Heart right ventricle (tissue), 16 donors: ENCODE measurements at regions of chr9 and their contacts with region 1.

Region 1: DNA sequence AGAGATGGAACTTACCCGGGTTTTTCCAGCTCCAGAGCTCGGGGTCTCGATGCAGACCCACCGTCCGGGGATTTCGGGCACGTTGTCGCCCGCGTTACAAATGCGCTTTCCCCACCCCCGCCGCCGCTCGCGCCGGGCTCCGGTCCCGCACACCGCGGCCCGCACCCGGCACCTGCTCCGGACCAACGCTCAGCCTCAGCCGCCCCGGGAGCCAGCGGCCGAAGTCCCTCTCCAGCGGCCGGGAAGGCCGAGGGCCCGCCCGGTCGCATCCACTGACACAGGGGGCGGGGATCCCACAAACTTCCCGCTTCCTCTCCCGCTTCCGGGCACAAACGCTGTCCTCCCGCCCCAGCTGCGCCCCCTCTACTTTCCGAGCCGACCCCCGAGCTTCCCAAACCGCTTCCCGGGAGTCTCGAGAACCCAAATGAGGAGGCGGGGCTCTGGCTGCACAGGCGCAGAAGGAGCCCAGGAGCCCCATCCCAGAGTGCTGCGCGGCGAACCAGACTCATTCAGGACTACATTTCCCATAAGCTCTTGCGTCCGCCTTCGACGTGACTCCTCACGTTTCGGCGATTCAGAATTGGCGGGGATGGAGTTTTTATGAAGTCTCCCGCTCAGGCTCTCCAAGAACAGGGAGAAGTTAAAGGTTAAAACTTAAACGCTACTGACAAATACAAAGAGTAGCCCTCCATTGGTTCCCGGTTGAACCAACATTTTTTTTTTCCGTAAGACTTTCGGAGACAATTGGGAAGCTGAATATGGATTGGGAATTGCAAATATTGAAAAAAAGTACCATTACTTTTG is at the start of gene ZNF782:
- DNase-seq: peak; percentile 91 to 95
- ATAC-seq: peak; percentile 99 to 100 (median 99)
- H3K4me3 ChIP-seq: peak within 1 kb of the TSS; percentile 66 to 90 (median 82)
- H3K27ac ChIP-seq: peak within 1 kb of the TSS in 9 of 10 donors; percentile 61 to 88 (median 84)
- H3K4me1 ChIP-seq: peaks cover 4 to 33% (median 21%) of the 10 kb centered on the region in 9 donors
- H3K27me3 ChIP-seq: no peaks in the 10 kb centered on the region
- CTCF ChIP-seq: no peak
- total RNA-seq, gene ZNF782: 1.9 to 4.8 (median 3.1) TPM

Region 2: DNA sequence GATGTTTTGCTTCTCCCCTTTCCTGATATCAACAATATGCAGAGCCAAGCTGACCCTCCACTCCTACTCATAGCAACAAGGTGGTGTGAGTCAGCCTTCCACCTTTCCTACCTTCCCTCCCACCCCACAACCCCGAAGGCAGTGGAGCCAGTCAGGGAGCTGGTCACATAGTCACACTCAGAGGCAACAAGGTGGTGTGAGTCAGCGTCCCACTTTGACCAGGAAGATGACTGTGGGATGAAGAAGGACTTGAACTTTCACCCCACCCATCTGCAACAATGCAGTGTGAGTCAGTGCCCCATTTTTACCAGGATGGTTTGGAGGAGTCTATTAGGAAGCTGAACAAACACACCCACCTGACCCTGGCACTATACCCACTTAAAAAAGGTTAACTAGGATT is 30.2 kb after region 1 on chr9:
- intact Hi-C with region 1: no loop called
- DNase-seq: no peak
- ATAC-seq: peak in 1 of 8 donors; percentile 25
- H3K4me3 ChIP-seq: no peak overlapping the region
- H3K27ac ChIP-seq: no peak overlapping the region
- H3K4me1 ChIP-seq: peaks cover 0 to 5% (median 0%) of the 10 kb centered on the region in 9 donors
- H3K27me3 ChIP-seq: peaks cover 0 to 3% (median 0%) of the 10 kb centered on the region in 7 donors
- CTCF ChIP-seq: no peak

Region 3: DNA sequence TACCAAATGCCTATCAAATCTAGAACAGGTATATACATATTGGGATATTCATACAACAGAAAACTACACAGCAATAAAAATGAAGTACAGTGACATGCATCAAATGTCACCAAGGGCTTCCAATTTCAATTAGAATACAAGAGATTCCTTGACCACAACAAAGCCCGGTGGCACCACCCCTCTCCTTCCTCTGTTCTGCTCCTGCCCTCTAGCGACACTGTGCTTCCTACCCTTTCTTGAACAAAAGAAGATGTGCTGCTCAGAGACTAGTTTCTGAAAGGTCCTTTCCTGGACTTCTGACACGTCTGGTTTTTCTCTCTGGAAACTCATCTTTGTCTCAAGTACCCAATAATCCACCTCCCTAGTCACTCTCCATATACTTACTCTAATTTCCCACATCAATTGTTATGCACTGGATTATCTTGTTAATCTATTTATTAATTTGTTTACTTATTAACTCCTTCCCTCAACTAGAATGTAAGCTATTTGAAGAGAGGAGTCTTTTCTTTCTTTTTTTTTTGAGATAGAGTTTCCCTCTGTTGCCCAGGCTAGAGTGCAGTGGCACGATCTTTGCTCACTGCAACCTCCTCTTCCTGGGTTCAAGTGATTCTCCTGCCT is 255.0 kb after region 1 on chr9:
- intact Hi-C with region 1: loop called in 8 of 10 experiments (anchors 1 to 10 kb)
- DNase-seq: peak in 1 of 2 donors; percentile 30
- ATAC-seq: peak in 3 of 8 donors; percentile 55 to 67 (median 55)
- H3K4me3 ChIP-seq: no peak overlapping the region
- H3K27ac ChIP-seq: no peak overlapping the region
- H3K4me1 ChIP-seq: no peaks in the 10 kb centered on the region
- H3K27me3 ChIP-seq: peaks cover 0 to 18% (median 0%) of the 10 kb centered on the region in 7 donors
- CTCF ChIP-seq: peak; percentile 12 to 60 (median 49)

Region 4: GRCh38 chr9:97237951-97238851 is 383.9 kb after region 1 on chr9:
- intact Hi-C with region 1: loop called in 3 of 10 experiments (anchors 1 to 10 kb)
- DNase-seq: peak; percentile 82 to 84
- ATAC-seq: peak; percentile 99 to 100 (median 99)
- H3K4me3 ChIP-seq: peak overlapping the region; percentile 41 to 84 (median 66)
- H3K27ac ChIP-seq: peak overlapping the region; percentile 2 to 89 (median 78)
- H3K4me1 ChIP-seq: peaks cover 0 to 17% (median 11%) of the 10 kb centered on the region in 9 donors
- H3K27me3 ChIP-seq: no peaks in the 10 kb centered on the region
- CTCF ChIP-seq: no peak

Region 5: DNA sequence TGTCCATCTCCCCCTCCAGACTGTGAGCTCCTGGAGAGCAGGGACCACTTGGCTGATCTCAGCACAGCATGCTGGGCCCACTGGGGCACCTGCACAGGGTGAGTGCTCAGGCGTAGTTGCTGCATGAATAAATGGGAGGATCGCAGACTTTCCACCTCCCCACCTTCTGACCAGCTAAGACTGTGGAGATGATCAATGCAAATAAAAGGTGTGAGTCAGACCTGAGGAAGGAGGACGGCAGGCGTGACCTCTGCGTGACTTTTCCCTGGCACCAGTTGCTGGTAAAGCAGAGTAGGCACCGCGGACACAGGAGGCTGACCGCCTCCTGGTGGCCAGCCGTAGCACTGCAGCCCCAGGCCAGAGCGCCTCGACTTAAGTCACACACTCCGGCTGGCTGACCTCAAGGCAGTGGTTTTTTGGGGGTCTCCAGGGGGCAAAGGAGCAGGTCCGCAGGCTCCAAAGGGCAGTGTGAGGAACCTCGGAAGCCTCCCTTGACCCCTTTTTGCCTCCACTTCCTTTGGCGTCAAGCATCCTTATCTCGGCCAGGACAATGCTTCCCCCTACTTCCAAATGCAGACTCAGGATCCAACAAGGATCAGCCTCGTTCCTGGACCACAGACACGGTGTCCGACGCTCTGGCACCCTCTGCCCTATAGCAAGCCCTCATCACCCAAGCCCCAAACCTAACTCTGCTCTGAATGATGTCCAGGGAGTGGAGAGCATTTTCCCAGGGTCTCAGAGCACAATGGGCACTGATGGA is 544.9 kb after region 1 on chr9:
- intact Hi-C with region 1: loop called (anchors 1 to 5 kb)
- DNase-seq: peak; percentile 18 to 67
- ATAC-seq: peak; percentile 65 to 90 (median 82)
- H3K4me3 ChIP-seq: no peak overlapping the region
- H3K27ac ChIP-seq: no peak overlapping the region
- H3K4me1 ChIP-seq: peaks cover 0 to 7% (median 0%) of the 10 kb centered on the region in 9 donors
- H3K27me3 ChIP-seq: peaks cover 0 to 6% (median 0%) of the 10 kb centered on the region in 7 donors
- CTCF ChIP-seq: peak; percentile 75 to 97 (median 92)

Region 6: GRCh38 chr9:97615439-97616072 is 761.3 kb after region 1 on chr9:
- intact Hi-C with region 1: loop called in 2 of 10 experiments (anchors 10 kb)
- DNase-seq: peak in 1 of 2 donors; percentile 66
- ATAC-seq: peak; percentile 44 to 76 (median 66)
- H3K4me3 ChIP-seq: no peak overlapping the region
- H3K27ac ChIP-seq: peak overlapping the region in 1 of 10 donors; percentile 15
- H3K4me1 ChIP-seq: peaks cover 0 to 13% (median 7%) of the 10 kb centered on the region in 9 donors
- H3K27me3 ChIP-seq: no peaks in the 10 kb centered on the region
- CTCF ChIP-seq: peak; percentile 64 to 89 (median 85)

Region 7: DNA sequence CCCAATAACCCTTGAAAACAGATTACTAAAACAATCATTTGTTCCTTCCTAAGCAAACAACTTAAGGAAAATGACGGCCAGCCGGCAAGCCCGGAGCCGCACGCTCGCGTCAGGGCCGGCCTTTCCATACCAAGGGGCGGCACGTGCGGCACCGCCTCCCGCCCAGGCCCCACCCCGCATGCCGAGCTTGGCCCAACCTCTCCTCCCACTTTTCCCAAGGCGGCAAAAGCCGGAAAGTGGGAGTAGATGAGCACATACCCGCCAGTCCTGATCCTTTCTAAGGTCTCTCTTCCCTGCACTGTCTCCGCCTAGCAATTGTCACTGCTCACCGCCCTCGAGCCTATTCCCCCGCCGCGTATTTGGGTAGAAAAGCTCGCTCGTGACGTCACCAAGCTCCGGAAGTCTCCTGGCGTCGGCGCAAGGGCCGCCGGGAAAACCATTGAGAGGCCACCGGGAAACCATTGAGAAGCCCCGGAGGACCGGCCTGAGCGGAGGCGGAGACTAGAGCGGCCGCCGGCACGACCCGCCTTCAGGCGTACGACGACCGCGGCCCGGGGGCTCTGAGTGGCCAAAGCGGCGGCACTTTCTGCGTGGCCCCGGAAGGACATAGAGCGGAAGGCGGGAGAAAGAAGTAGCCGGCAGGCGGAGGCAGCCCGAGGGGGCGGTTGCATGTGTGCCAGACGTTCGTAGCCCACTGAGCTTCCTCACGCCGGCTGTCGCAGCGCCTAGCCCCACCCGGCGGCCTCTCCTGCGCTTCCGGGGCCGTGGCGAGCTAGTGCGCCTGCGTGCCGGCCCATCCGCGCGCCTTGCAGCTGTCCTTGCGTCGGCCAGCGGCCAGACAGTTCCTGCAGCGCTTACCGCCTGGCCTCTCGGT is 778.9 kb after region 1 on chr9 and contains the starts of genes NCBP1 and TSTD2:
- intact Hi-C with region 1: loop called in 1 of 10 experiments (anchors 10 kb)
- DNase-seq: peak; percentile 97
- ATAC-seq: peak; percentile 94 to 97 (median 95)
- H3K4me3 ChIP-seq: peak within 1 kb of the TSS; percentile 49 to 98 (median 94)
- H3K27ac ChIP-seq: peak within 1 kb of the TSS; percentile 93 to 99 (median 96)
- H3K4me1 ChIP-seq: peaks cover 2 to 78% (median 59%) of the 10 kb centered on the region in 9 donors
- H3K27me3 ChIP-seq: no peaks in the 10 kb centered on the region
- CTCF ChIP-seq: peak in 4 of 9 donors; percentile 4 to 40 (median 22)
- total RNA-seq, gene NCBP1: 11.8 to 20.4 (median 15.9) TPM
- total RNA-seq, gene TSTD2: 19.8 to 29.4 (median 23.4) TPM